ENCODE measurements at regions of chr14 and their contacts with region 1.

Region 1: DNA sequence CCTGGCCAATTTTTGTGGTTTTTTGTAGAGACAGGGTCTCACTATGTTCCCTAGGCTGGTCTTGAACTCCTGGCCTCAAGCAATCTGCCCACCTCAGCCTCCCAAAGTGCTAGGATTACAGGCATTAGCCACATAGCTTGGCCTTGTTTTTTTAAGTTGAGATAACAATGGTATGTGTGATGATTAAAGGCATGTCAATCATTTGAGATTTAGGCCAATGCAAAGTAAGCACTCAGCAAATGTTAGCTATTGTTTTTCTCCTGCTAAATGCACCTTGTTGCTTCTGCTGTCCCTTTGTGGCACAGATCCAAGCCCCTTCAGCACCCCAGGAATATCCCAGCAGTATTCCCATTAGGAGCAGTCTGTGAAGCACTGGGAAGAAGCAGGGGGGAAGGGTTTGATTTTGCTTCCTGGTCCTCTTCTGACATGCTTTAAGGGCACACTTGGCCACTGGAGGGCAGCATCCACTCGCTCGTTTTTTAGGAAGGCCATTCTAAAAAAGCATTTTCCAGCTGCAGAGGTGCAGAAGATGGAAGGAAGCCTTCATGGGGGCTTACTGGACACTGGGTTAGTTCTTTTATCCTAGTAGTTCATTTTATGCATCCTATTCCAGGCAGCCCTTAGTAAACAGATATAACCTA is 70.2 kb upstream of the ZFP36L1 start:
- DNase-seq: peak in 1 of 2 donors; percentile 84
- H3K4me3 ChIP-seq: no peak overlapping the region
- H3K27ac ChIP-seq: no peak overlapping the region
- H3K4me1 ChIP-seq: no peaks in the 10 kb centered on the region
- H3K27me3 ChIP-seq: no peaks in the 10 kb centered on the region
- CTCF ChIP-seq: peak; percentile 55 to 79 (median 74)

Region 2: GRCh38 chr14:69107407-69108003 is 244.4 kb after region 1 on chr14:
- intact Hi-C with region 1: loop called (anchors 1 kb)
- DNase-seq: no peak
- H3K4me3 ChIP-seq: no peak overlapping the region
- H3K27ac ChIP-seq: no peak overlapping the region
- H3K4me1 ChIP-seq: peaks cover 0 to 2% of the 10 kb centered on the region in 2 donors
- H3K27me3 ChIP-seq: no peaks in the 10 kb centered on the region
- CTCF ChIP-seq: peak; percentile 64 to 82 (median 74)